ENCODE measurements at regions of chr2 and their contacts with region 1.

Region 1: GRCh38 chr2:61694312-61695274 is 156.4 kb upstream of the XPO1 start:
- DNase-seq: peak; percentile 95
- CTCF ChIP-seq: peak; percentile 66

Region 2: DNA sequence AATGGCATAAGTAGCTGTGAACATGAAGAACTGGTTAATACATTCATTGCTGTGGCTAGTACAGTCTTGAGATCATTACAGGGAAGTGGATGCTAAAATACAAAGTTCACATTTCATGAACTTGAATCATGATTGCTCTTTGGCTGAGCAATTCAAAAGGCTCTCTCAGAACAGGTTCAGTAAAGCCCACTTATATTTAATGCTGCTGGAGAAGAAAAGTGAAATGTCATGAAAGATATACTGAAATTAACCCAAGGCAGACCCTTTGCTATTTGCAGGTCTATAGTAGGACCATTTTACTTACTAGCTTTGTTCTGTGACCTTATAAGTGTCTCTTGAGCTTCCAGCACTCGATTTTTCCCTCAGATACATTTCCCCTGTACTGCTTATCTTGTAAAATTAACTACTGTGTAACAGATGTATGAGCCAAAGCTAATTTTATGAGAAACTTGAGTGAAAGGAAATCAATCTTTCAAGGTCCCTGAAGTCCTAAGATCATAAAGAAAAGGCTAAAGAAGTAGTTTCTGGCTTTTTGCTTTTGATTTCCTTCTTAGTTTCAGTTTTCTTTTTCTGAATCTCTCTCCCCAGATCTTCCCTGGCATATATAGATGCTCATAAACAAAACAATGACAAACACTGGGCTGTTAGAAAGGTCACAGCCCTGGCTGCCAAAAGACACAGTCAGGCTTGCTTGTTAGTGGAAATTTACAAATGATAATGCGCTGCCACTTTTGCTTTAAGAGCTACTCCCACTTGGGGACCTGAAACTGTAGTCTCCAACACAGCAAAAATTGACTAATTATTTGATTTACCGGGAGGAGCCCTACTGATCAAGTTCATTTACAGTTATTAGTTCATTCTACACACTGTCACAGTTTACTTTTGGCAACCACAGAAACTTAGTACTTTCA is 23.7 kb before region 1 on chr2:
- CTCF ChIA-PET with region 1: no interaction called
- POLR2A ChIA-PET with region 1: no interaction called
- DNase-seq: peak; percentile 41
- CTCF ChIP-seq: no peak

Region 3: DNA sequence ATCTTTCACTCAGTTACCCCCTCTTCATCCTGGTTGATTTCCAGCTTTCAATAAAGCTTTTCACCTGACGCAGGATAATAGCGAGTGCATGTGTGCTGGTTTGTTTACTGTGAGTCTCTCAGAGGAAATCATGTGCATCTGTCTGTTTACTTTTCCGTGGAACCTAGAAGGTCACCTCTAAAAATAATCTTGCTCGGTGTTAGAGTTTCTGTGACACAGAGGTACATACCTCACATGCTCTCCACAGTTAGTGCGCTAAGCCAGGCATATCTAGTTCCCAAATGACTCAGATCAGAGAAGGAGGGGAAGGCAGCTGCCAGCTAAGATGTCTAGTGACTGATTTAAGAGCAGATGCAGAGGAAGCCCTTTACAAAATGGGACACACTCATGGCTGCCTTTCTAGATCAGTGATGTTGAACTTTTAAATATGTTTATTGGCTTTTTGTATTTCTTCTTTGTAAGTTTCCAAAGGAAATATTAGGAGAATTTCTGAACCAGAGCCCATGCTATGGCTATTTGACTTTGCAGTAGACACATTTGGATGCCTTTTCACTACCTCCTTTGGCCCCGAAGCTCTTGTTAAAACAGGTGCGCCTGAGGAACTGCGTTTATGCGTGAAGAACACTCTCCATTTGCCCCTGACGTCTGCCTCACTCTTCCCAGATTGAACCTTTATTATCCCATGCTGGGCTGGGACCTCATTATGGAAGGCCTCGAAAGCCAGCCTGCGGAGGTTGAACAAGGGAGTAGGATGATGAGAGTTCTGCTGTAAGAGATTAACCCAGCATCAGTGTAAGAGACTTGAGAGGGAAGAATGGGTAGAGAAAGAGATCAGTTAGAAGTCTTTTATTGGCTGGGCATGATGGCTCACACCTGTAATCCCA is 13.6 kb after region 1 on chr2:
- CTCF ChIA-PET with region 1: interaction called, 18 read pairs
- POLR2A ChIA-PET with region 1: no interaction called
- DNase-seq: peak; percentile 80
- CTCF ChIP-seq: no peak